Naive thymus-derived CD4-positive, alpha-beta T cell (primary cell): ENCODE measurements at regions of chr1 and their contacts with region 1.

Region 1: DNA sequence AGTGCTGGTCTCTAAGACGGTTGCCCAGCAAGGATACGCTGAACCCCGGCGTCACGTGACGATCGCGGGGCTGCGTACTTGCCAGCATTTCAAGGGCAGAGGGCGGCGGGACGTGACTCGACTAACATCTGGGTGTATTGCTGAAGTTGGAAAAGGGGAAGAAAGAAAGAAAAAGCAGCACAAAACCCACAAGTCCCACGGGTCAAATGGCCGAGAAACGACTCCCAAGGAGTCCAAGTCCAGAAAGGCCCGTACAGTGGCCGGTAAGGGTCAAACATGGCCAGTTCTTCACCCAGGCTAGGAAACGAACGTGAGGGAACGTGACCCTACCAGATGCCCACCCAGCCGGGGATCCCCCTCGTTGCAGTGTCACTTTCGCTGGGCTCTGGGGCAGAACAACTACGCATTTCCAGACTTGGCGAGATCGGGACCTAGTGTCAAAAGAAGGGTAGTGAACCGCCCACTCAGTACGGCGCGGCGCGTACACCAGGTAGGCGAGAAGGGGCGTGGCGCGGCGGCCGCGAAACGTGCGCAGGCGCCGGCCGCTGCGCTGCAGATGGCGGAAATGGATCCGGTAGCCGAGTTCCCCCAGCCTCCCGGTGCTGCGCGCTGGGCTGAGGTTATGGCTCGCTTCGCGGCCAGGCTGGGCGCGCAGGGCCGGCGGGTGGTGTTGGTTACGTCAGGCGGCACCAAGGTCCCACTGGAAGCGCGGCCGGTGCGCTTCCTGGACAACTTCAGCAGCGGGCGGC is at the starts of genes PPCS and ZMYND12:
- DNase-seq: peak; percentile 84 to 94 (median 92)
- ATAC-seq: peak; percentile 95
- H3K4me3 ChIP-seq: peak within 1 kb of the TSS; percentile 100
- H3K4me3 Mint-ChIP-seq: peak within 1 kb of the TSS; percentile 85 to 99 (median 96)
- H3K27ac ChIP-seq: peak within 1 kb of the TSS; percentile 91
- H3K27ac Mint-ChIP-seq: peak within 1 kb of the TSS; percentile 95 to 100 (median 98)
- H3K4me1 ChIP-seq: peaks cover 17 to 23% of the 10 kb centered on the region in 2 donors
- H3K4me1 Mint-ChIP-seq: peaks cover 23 to 53% (median 40%) of the 10 kb centered on the region in 7 donors
- H3K27me3 ChIP-seq: no peaks in the 10 kb centered on the region
- H3K27me3 Mint-ChIP-seq: peaks cover 0 to under 1% (median 0%) of the 10 kb centered on the region in 5 donors
- total RNA-seq, gene PPCS: 45.4 to 78.4 (median 50.0) TPM
- total RNA-seq, gene ZMYND12: 0.44 to 1.2 (median 1.1) TPM

Region 2: DNA sequence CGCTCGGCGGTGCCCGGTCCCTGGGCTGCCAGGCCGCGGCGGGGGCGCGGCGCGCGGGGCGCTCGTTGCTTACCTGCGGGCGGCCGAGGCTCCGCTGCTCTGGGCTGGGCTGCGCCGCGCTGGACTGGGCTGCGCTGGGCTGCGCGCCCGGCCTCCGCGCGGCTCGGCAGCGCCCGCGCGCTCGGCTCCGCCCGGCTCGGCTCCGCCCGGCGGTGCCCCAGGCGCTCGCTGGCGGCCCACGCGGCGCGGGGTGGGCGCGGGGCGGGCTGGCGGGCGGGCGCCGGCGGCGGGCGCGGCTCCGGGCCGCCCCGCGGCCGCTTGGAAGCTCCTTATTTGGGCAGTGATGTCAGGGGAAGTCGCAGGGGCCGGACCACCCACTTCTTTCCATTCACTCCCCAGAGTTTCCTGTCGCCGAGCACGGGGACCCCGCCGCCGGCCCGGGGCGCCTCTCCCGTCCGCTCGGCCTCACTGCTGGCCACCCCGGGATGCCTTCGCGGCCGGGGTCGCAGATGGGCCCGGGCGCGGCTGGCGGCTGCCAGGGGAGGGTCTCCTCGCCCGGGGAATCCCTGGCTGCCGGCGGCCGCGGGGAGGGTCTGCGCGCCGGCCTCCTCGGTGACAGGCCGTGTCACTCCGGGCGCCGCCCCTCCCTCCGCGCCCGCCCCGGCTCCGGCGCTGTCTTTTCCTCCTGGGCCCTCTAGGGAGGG is 794.0 kb before region 1 on chr1:
- CTCF ChIA-PET with region 1: no interaction called
- POLR2A ChIA-PET with region 1: no interaction called
- intact Hi-C with region 1: loop called in 1 of 2 experiments (anchors 10 kb)
- DNase-seq: peak; percentile 47 to 82 (median 60)
- ATAC-seq: peak; percentile 88
- H3K4me3 ChIP-seq: peak overlapping the region; percentile 60
- H3K4me3 Mint-ChIP-seq: peak overlapping the region in 6 of 10 donors; percentile 13 to 93 (median 70)
- H3K27ac ChIP-seq: peak overlapping the region; percentile 61
- H3K27ac Mint-ChIP-seq: peak overlapping the region in 2 of 9 donors; percentile 56 to 84
- H3K4me1 ChIP-seq: peaks cover 25 to 51% of the 10 kb centered on the region in 2 donors
- H3K4me1 Mint-ChIP-seq: peaks cover 42 to 80% (median 66%) of the 10 kb centered on the region in 7 donors
- H3K27me3 ChIP-seq: no peaks in the 10 kb centered on the region
- H3K27me3 Mint-ChIP-seq: no peaks in the 10 kb centered on the region

Region 3: DNA sequence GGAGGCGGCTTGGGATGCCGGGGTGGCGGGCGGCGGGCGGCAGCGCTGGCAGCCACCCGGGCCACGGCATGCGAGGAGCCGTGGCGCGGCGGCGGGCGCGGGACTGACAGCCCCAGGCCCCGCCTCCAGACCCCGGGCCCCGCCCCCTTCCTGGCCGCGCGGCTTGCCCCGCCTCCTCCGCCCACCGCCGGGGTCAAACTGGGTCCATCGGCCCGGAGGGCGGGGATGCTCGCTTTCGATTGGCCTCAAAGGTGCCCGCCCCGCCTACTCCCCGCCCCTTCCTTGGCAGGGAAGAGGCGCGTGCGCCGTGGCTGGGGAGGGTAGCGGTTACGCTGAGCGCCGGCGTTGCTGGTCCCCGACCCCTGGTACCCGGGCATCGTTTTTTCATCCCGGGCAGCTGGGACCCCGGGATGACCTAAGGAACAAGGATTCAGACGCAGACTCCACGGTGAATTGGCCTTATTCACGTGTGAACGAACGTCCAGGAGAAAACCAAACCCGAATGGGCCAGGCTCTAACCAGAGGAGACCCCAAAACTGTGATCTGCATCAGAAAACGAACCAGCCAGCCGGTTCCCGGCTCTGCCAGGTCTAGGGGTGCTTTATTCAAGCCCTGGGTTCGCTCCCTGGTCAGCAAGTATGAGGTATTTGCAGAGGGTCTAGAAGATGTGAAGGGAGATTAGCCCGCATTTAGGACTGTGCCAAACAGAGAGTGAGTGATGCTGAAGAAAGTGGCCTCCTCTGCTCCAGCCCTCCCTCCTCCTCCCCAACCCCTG is 420.2 kb before region 1 on chr1:
- CTCF ChIA-PET with region 1: no interaction called
- POLR2A ChIA-PET with region 1: no interaction called
- intact Hi-C with region 1: loop called in 1 of 2 experiments (anchors 1 kb)
- DNase-seq: peak; percentile 92 to 100 (median 96)
- ATAC-seq: peak; percentile 98
- H3K4me3 ChIP-seq: peak overlapping the region; percentile 72
- H3K4me3 Mint-ChIP-seq: peak overlapping the region in 9 of 10 donors; percentile 74 to 88 (median 84)
- H3K27ac ChIP-seq: peak overlapping the region; percentile 74
- H3K27ac Mint-ChIP-seq: peak overlapping the region in 5 of 9 donors; percentile 37 to 82 (median 65)
- H3K4me1 ChIP-seq: peaks cover 25 to 43% of the 10 kb centered on the region in 2 donors
- H3K4me1 Mint-ChIP-seq: peaks cover 23 to 45% (median 39%) of the 10 kb centered on the region in 7 donors
- H3K27me3 ChIP-seq: no peaks in the 10 kb centered on the region
- H3K27me3 Mint-ChIP-seq: peaks cover 0 to 20% (median 0%) of the 10 kb centered on the region in 5 donors

Region 4: GRCh38 chr1:42319128-42319851 is 136.9 kb before region 1 on chr1:
- CTCF ChIA-PET with region 1: no interaction called
- POLR2A ChIA-PET with region 1: interaction called, 5 read pairs
- intact Hi-C with region 1: loop called in 1 of 2 experiments (anchors 5 kb)
- DNase-seq: peak in 2 of 9 donors; percentile 2 to 4
- ATAC-seq: peak; percentile 46
- H3K4me3 ChIP-seq: peak overlapping the region; percentile 31
- H3K4me3 Mint-ChIP-seq: peak overlapping the region; percentile 70 to 88 (median 82)
- H3K27ac ChIP-seq: peak overlapping the region; percentile 59
- H3K27ac Mint-ChIP-seq: peak overlapping the region; percentile 66 to 93 (median 89)
- H3K4me1 ChIP-seq: peaks cover 29 to 74% of the 10 kb centered on the region in 2 donors
- H3K4me1 Mint-ChIP-seq: peaks cover 68 to 96% (median 93%) of the 10 kb centered on the region in 7 donors
- H3K27me3 ChIP-seq: no peaks in the 10 kb centered on the region
- H3K27me3 Mint-ChIP-seq: no peaks in the 10 kb centered on the region

Region 5: DNA sequence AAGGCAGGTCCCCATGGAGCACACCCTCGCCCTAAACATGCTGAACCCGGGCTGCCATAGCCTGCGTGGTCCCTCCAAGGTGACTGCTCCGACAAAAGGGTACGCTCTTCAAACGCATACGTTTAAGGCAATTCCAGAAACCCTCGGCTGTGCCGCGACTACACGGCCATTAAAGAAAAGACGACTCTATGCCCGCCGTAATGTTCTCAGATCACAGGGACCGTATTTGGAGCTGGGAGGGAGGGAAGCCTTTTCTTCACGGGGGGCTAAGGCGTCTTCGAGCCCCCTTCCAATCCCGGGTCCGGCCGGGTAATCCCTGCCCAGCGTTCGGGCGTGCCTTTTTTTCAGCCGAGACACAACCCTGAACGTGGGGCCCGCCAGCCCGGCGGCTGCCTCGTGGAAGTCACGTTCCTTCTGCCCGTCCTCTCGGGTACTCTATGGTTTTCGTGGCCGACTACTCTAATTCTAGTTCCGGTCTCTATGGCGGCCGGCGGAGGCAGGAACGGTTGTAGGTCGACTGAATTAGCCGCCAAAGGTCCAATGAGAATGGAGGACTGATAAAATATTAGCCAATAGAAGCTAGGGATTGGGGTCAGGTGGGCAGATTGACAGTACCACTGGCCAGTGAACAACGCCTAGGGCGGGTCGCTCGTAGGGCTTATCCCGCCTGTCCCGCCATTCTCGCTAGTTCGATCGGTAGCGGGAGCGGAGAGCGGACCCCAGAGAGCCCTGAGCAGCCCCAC is 225.7 kb after region 1 on chr1 and contains the start of gene YBX1:
- CTCF ChIA-PET with region 1: no interaction called
- POLR2A ChIA-PET with region 1: interaction called, 17 read pairs
- intact Hi-C with region 1: loop called in 1 of 2 experiments (anchors 1 kb)
- DNase-seq: peak; percentile 85 to 98 (median 97)
- ATAC-seq: peak; percentile 94
- H3K4me3 ChIP-seq: peak within 1 kb of the TSS; percentile 74
- H3K4me3 Mint-ChIP-seq: peak within 1 kb of the TSS; percentile 95 to 99 (median 98)
- H3K27ac ChIP-seq: peak within 1 kb of the TSS; percentile 82
- H3K27ac Mint-ChIP-seq: peak within 1 kb of the TSS; percentile 93 to 98 (median 97)
- H3K4me1 ChIP-seq: peaks cover 35 to 47% of the 10 kb centered on the region in 2 donors
- H3K4me1 Mint-ChIP-seq: peaks cover 42 to 66% (median 54%) of the 10 kb centered on the region in 7 donors
- H3K27me3 ChIP-seq: no peaks in the 10 kb centered on the region
- H3K27me3 Mint-ChIP-seq: no peaks in the 10 kb centered on the region
- total RNA-seq, gene YBX1: 277 to 471 (median 287) TPM

Region 6: DNA sequence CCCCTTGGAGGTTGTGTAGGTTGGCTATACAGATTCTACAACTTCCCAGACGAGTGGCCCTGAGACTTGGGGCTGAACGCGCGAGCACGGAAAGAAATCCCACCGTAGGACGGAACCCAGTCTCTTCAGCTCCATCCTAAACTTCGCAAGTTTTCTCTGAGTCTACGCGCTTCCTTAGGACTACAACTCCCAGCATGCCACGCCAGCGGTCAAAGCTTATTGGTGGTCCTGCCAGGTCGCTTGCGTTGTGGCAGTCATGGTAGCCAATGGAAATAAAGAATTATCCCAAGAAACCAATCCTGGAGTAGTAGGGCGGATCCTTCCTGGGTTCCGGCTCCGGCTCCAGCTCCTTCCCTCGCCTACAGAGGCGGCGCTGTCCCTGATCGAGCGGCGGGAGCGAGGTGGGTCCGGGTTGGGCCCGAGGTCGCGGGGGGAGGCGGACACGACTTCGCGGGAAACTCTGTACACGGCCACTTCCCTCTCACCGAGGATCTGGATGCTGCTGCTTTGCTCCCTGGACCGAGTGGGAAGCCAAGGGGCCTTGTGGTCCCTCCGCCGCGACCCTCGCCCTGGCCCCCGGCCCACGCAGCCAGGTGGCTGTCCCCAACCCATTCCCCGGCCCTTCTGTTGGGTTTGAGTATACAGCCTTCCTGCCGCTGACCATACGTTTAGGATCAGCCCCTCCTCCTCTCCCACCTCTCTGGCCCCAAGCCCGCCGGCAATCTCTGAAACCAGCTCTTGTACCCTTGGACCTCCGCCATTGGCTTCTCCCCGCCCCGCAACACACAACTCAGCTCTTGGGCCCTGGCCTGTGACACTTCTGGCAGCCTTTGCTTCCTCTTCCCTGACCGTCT is 390.3 kb after region 1 on chr1 and contains the start of gene ZNF691:
- CTCF ChIA-PET with region 1: no interaction called
- POLR2A ChIA-PET with region 1: no interaction called
- intact Hi-C with region 1: loop called (anchors 1 to 5 kb)
- DNase-seq: peak; percentile 51 to 91 (median 84)
- ATAC-seq: peak; percentile 99
- H3K4me3 ChIP-seq: peak within 1 kb of the TSS; percentile 97
- H3K4me3 Mint-ChIP-seq: peak within 1 kb of the TSS; percentile 84 to 100 (median 96)
- H3K27ac ChIP-seq: peak within 1 kb of the TSS; percentile 72
- H3K27ac Mint-ChIP-seq: peak within 1 kb of the TSS; percentile 71 to 95 (median 85)
- H3K4me1 ChIP-seq: peaks cover 11 to 22% of the 10 kb centered on the region in 2 donors
- H3K4me1 Mint-ChIP-seq: peaks cover 19 to 38% (median 31%) of the 10 kb centered on the region in 7 donors
- H3K27me3 ChIP-seq: no peaks in the 10 kb centered on the region
- H3K27me3 Mint-ChIP-seq: no peaks in the 10 kb centered on the region
- total RNA-seq, gene ZNF691: 3.5 to 17.2 (median 12.8) TPM